Endothelial cell of umbilical vein (primary cell): ENCODE measurements at regions of chr15 and their contacts with region 1.

Region 1: DNA sequence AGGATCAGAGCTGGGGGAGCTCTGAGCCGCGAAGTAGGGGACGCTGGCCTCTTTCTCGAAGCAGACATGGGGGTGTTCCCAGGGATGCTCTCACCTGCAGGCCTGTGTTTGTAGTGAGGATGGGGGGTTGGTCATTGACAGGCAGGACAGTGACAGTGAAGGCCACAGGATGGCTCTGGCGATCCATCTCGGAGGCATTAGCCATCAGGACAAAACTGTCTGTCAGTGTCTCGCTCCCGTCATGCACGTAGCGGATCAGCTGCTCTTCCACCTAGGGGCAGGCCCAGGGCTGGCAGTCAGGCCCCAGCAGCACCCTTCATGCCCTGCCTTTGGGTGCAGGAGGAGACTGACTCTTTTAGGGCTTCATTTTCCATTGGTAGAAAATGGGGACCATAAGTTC is 28.0 kb downstream of the CSPG4 start:
- DNase-seq: no peak
- H3K4me3 ChIP-seq: no peak overlapping the region
- H3K27ac ChIP-seq: no peak overlapping the region
- H3K4me1 ChIP-seq: no peaks in the 10 kb centered on the region
- H3K27me3 ChIP-seq: peaks cover 14 to 21% of the 10 kb centered on the region in 2 experiments
- CTCF ChIP-seq: no peak
- POLR2A ChIP-seq: no peak

Region 2: DNA sequence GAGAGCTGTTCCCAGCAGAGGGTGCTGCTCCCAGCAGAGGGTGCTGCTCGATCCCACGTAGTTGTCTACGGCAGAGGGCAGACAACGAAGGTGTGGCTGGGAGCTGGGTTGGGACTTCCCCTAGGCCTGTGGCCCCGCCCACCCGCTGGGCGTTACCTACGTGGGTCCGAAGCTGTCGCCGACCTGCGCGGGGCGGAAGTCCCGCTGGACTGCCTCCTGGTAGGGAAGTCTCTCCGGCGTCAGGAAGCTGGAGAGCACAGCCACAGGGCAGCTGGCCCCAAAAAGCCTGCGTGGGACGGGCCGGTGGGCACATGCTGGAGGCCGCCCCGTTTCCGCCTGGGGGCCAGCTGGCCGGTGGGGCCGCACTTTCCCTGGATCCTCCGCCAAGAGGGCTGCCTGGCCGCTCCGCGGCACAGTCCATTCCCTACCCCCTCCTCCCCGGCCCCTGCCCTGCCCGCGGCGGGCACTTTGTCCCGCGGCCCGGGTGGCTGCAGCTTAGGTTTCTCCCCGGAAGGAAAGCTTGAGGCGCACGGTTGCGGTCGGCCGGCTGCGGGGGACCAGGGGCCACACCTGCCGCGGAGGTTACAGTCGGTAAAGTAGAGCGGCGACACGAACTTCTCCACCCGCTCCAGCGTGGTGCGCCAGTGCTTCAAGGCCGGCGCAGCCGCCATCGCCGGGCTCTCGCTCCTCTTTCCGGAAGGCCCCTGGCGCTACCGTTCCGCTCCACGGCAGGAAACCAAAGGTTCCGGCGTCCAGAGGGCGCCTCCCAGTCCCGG is 316.5 kb before region 1 on chr15 and contains the start of gene MAN2C1:
- CTCF ChIA-PET with region 1: interaction called, 18 read pairs
- POLR2A ChIA-PET with region 1: no interaction called
- dilution Hi-C with region 1: no loop called
- intact Hi-C with region 1: loop called (anchors 1 kb)
- DNase-seq: peak; percentile 93
- H3K4me3 ChIP-seq: peak within 1 kb of the TSS; percentile 50 to 83 (median 51)
- H3K27ac ChIP-seq: peak within 1 kb of the TSS; percentile 79
- H3K4me1 ChIP-seq: peaks cover 15% of the 10 kb centered on the region
- H3K27me3 ChIP-seq: no peaks in the 10 kb centered on the region
- CTCF ChIP-seq: peak; percentile 63 to 76
- POLR2A ChIP-seq: peak; percentile 93
- total RNA-seq, gene MAN2C1: 248 TPM in 2 replicates

Region 3: GRCh38 chr15:75508840-75509532 is 175.7 kb before region 1 on chr15:
- CTCF ChIA-PET with region 1: interaction called, 14 read pairs
- POLR2A ChIA-PET with region 1: no interaction called
- dilution Hi-C with region 1: no loop called
- intact Hi-C with region 1: loop called (anchors 2 kb)
- DNase-seq: peak; percentile 58
- H3K4me3 ChIP-seq: no peak overlapping the region
- H3K27ac ChIP-seq: no peak overlapping the region
- H3K4me1 ChIP-seq: no peaks in the 10 kb centered on the region
- H3K27me3 ChIP-seq: no peaks in the 10 kb centered on the region
- CTCF ChIP-seq: peak; percentile 30 to 61
- POLR2A ChIP-seq: no peak

Region 4: GRCh38 chr15:75597667-75598341 is 86.8 kb before region 1 on chr15:
- CTCF ChIA-PET with region 1: interaction called, 10 read pairs
- POLR2A ChIA-PET with region 1: no interaction called
- dilution Hi-C with region 1: no loop called
- intact Hi-C with region 1: no loop called
- DNase-seq: peak; percentile 36
- H3K4me3 ChIP-seq: no peak overlapping the region
- H3K27ac ChIP-seq: no peak overlapping the region
- H3K4me1 ChIP-seq: peaks cover 9% of the 10 kb centered on the region
- H3K27me3 ChIP-seq: no peaks in the 10 kb centered on the region
- CTCF ChIP-seq: peak; percentile 15 to 30
- POLR2A ChIP-seq: no peak

Region 5: DNA sequence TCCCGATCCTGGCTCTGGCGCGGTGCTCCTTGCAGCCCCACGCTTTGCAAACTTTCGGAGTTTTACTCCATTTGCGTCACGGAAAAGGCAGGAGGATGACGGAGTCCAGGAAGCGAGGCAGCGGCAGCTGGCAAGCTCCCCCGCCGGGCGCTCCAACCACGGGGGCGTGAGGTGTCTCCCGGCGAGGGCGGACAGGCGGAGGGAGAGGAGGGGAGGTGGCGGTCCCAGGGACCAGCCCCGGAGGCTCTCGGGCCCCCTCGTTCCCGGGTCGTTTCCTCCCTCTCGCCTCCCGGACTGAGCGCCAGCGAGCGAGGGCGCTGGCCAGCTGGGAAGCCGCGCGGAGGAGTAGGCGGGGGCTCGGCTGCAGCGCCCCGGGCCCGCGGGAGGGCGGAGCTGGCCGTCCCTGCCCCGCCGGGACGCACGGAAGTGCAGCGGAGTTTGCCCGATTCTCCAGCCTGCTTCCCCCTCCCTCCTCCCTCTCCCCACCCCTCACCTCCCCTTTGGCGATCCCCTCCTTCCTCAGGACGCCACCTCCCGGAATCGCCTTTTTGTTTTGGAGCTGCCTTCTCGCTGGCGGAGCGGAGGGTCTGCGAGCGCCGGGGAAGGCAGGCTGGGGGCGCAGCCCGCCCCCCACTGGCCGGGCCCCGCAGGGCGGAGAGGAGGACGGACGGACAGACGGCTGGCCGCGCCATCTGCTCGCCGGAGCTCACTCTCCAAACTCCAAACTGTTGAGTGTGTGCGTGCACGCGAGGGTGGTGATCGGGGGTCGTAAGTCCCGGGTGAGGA is 37.1 kb before region 1 on chr15 and contains the start of gene SNX33:
- CTCF ChIA-PET with region 1: interaction called, 17 read pairs
- POLR2A ChIA-PET with region 1: no interaction called
- dilution Hi-C with region 1: no loop called
- intact Hi-C with region 1: loop called (anchors 1 kb)
- DNase-seq: peak; percentile 76
- H3K4me3 ChIP-seq: peak within 1 kb of the TSS; percentile 53 to 72 (median 64)
- H3K27ac ChIP-seq: peak within 1 kb of the TSS; percentile 37
- H3K4me1 ChIP-seq: peaks cover 29% of the 10 kb centered on the region
- H3K27me3 ChIP-seq: no peaks in the 10 kb centered on the region
- CTCF ChIP-seq: peak; percentile 67 to 74
- POLR2A ChIP-seq: no peak
- total RNA-seq, gene SNX33: 10.6 and 12.6 TPM in 2 replicates

Region 6: GRCh38 chr15:75758071-75758872 is 73.6 kb after region 1 on chr15:
- CTCF ChIA-PET with region 1: no interaction called
- POLR2A ChIA-PET with region 1: no interaction called
- dilution Hi-C with region 1: no loop called
- intact Hi-C with region 1: no loop called
- DNase-seq: peak; percentile 54
- H3K4me3 ChIP-seq: peak overlapping the region; percentile 25 to 54 (median 36)
- H3K27ac ChIP-seq: no peak overlapping the region
- H3K4me1 ChIP-seq: peaks cover 4% of the 10 kb centered on the region
- H3K27me3 ChIP-seq: peaks cover 0 to 1% of the 10 kb centered on the region in 2 experiments
- CTCF ChIP-seq: peak in 1 of 2 donors; percentile 35
- POLR2A ChIP-seq: no peak

Region 7: GRCh38 chr15:75801859-75802593 is 117.4 kb after region 1 on chr15:
- CTCF ChIA-PET with region 1: interaction called, 59 read pairs
- POLR2A ChIA-PET with region 1: no interaction called
- dilution Hi-C with region 1: no loop called
- intact Hi-C with region 1: loop called (anchors 1 kb)
- DNase-seq: peak; percentile 67
- H3K4me3 ChIP-seq: no peak overlapping the region
- H3K27ac ChIP-seq: no peak overlapping the region
- H3K4me1 ChIP-seq: no peaks in the 10 kb centered on the region
- H3K27me3 ChIP-seq: peaks cover 44 to 49% of the 10 kb centered on the region in 2 experiments
- CTCF ChIP-seq: peak; percentile 59 to 91
- POLR2A ChIP-seq: no peak